A549 (cell line): ENCODE measurements at regions of chr17 and their contacts with region 1.

Region 1: DNA sequence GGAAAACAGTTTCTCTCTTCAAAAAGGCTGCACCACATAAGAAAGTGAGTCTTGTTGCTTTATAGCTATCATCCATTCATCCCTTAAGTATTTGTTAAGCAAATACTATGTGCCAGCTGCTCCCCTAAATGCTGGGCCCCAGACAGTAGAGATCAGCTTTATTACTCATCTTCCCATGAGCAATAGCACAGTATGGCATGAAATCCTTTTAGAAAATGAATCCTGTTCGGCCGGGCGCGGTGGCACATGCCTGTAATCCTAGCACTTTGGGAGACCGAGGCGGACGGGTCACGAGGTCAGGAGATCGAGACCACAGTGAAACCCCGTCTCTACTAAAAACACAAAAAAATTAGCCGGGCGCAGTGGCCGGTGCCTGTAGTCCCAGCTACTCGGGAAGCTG is 99.5 kb downstream of the MYO1D start:
- DNase-seq: peak; percentile 21 to 50
- ATAC-seq: peak; percentile 95 to 96
- H3K4me3 ChIP-seq: 0 out of 3 replicates have a peak overlapping the region, but pooled peaks have one; percentile 7
- H3K27ac ChIP-seq: peak overlapping the region; percentile 6 to 67; a peak in 4 of 6 replicates
- H3K4me1 ChIP-seq: 0 out of 3 replicates have a peak, but pooled peaks cover 9% of the 10 kb centered on the region
- CTCF ChIP-seq: no peak
- EP300 ChIP-seq: no peak
- POLR2A ChIP-seq: no peak
- RAD21 ChIP-seq: no peak

Region 2: GRCh38 chr17:32536736-32537643 is 240.4 kb before region 1 on chr17:
- CTCF ChIA-PET with region 1: no interaction called
- POLR2A ChIA-PET with region 1: no interaction called
- DNase-seq: no peak
- ATAC-seq: no peak
- H3K4me3 ChIP-seq: no peak overlapping the region
- H3K27ac ChIP-seq: no peak overlapping the region
- H3K4me1 ChIP-seq: no peaks in the 10 kb centered on the region
- CTCF ChIP-seq: no peak
- EP300 ChIP-seq: no peak
- POLR2A ChIP-seq: no peak
- RAD21 ChIP-seq: no peak

Region 3: DNA sequence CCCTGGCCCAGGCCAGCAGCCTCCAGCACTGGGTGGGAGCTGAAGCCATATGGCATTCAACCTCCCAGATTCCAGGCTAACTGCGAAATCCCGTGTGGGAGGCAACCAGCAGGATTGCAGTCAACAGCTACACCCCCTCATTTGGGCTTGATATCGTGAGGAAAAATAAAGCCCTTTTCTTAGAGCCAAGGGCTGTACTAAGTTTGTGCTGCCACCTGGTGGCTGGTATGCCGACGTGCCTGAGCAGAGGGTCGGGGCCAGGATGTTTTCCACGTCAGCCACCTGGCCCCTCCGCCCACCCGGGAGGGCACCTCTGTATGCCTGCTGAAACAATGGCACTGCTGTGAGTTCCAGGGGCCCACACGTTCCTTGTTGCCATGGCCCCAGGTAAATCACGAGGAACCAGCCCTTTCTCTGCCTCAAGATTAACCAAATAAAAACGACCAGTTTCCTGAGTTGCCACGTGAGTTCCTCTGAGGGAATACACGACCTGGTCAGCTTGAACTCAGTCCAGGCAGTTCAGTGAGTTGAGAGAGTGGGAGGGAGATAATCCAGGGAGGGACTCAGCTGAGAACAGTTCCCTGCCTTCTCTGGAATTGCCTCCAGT is 159.6 kb after region 1 on chr17:
- CTCF ChIA-PET with region 1: interaction called, 34 read pairs
- POLR2A ChIA-PET with region 1: no interaction called
- DNase-seq: peak; percentile 69 to 78
- ATAC-seq: peak; percentile 79 to 95
- H3K4me3 ChIP-seq: no peak overlapping the region
- H3K27ac ChIP-seq: no peak overlapping the region
- H3K4me1 ChIP-seq: no peaks in the 10 kb centered on the region
- CTCF ChIP-seq: peak; percentile 85
- EP300 ChIP-seq: no peak
- POLR2A ChIP-seq: no peak
- RAD21 ChIP-seq: peak; percentile 52 to 54

Region 4: GRCh38 chr17:33055171-33055611 is 277.8 kb after region 1 on chr17:
- CTCF ChIA-PET with region 1: no interaction called
- POLR2A ChIA-PET with region 1: no interaction called
- DNase-seq: no peak
- ATAC-seq: no peak
- H3K4me3 ChIP-seq: no peak overlapping the region
- H3K27ac ChIP-seq: no peak overlapping the region
- H3K4me1 ChIP-seq: peaks cover 19% of the 10 kb centered on the region
- CTCF ChIP-seq: no peak
- EP300 ChIP-seq: no peak
- POLR2A ChIP-seq: no peak
- RAD21 ChIP-seq: no peak